Activated CD8-positive, alpha-beta T cell treated with anti-CD3 and anti-CD28 coated beads for 36 hours (primary cell): ENCODE measurements at regions of chr9 and their contacts with region 1.

Region 1: GRCh38 chr9:129988607-129989361 is 54.2 kb downstream of the FNBP1 start:
- DNase-seq: peak; percentile 42
- ATAC-seq: peak; percentile 51
- H3K4me3 Mint-ChIP-seq: peak overlapping the region; percentile 31
- H3K27ac Mint-ChIP-seq: peak overlapping the region; percentile 93
- H3K4me1 Mint-ChIP-seq: peaks cover 75% of the 10 kb centered on the region
- H3K27me3 Mint-ChIP-seq: no peaks in the 10 kb centered on the region
- CTCF ChIP-seq: no peak

Region 2: DNA sequence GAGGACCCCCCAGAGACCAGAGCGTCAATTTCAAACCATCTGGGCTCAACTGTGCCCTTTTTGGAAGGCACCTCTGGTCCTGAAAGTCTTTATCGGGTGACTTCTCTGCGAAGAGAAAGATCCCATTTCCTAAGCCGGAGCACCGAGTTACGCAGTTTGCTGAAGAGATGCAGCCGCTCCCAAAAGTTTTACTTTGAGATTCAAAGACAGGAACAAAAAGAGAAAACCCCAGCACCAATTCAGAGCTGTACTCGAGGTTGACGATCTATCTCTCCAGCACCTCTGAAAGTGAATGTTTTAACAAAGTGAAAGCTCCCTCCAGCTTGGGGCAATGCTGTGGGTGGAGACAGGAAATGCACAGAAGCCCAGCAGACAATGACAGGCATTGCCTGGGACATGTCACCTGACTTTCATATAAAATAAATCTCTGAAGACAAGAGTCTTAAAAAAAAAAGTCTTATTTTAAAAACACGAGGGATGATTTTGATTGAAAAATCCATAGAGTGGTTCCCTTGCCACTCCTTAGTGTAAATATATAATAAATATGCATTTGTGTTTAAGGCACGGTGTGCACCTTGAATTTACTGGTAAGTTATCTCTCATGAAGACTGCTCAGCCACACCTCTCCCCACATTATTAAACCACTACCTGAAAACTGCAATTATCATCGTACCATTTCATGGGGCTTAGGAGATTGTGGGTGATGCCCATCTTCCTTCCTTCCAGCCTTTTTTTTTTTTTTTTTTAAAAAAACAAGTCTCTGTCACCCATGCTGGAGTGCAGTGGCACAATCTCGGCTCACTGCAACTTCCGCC is 25.7 kb before region 1 on chr9:
- CTCF ChIA-PET with region 1: no interaction called
- POLR2A ChIA-PET with region 1: interaction called, 12 read pairs
- intact Hi-C with region 1: no loop called
- DNase-seq: peak; percentile 86
- ATAC-seq: peak; percentile 93
- H3K4me3 Mint-ChIP-seq: peak overlapping the region; percentile 79
- H3K27ac Mint-ChIP-seq: peak overlapping the region; percentile 89
- H3K4me1 Mint-ChIP-seq: peaks cover 82% of the 10 kb centered on the region
- H3K27me3 Mint-ChIP-seq: no peaks in the 10 kb centered on the region
- CTCF ChIP-seq: no peak

Region 3: GRCh38 chr9:130018260-130018659 is 29.5 kb after region 1 on chr9:
- CTCF ChIA-PET with region 1: interaction called, 4 read pairs
- POLR2A ChIA-PET with region 1: interaction called, 21 read pairs
- intact Hi-C with region 1: no loop called
- DNase-seq: peak; percentile 44
- ATAC-seq: no peak
- H3K4me3 Mint-ChIP-seq: no peak overlapping the region
- H3K27ac Mint-ChIP-seq: peak overlapping the region; percentile 95
- H3K4me1 Mint-ChIP-seq: peaks cover 75% of the 10 kb centered on the region
- H3K27me3 Mint-ChIP-seq: no peaks in the 10 kb centered on the region
- CTCF ChIP-seq: no peak

Region 4: DNA sequence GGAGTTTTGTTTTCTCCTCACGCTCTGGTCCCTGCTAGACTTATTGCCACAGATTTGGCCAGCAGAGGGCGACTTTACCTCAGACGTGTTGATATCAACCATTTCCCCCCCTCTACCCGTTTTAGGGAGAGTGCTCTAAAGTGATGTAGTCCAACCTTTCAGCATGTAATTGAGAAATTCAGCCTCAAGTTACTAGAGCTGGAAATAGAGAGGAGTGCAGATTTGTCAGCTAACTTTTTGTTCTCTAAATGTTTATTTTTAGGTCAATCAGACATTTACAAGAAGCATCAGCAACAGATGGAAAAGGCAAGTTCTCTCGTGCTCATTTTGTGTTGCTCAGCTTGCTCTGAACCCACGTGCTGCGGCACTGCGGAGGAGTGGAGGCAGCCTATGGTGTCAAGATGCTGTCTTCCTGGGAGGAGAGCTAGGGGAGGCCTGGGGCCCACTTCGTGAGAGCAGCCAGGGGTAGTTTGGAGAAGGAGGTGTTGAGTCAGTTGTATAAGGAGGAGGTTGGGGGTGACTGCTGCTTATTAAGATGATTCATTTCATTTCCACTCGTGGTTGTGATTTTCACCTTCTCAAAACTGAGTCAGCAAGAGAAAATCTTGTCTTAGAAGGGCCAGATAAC is 118.6 kb after region 1 on chr9:
- CTCF ChIA-PET with region 1: no interaction called
- POLR2A ChIA-PET with region 1: no interaction called
- intact Hi-C with region 1: no loop called
- DNase-seq: peak; percentile 95
- ATAC-seq: peak; percentile 89
- H3K4me3 Mint-ChIP-seq: no peak overlapping the region
- H3K27ac Mint-ChIP-seq: peak overlapping the region; percentile 81
- H3K4me1 Mint-ChIP-seq: peaks cover 33% of the 10 kb centered on the region
- H3K27me3 Mint-ChIP-seq: no peaks in the 10 kb centered on the region
- CTCF ChIP-seq: peak; percentile 95

Region 5: DNA sequence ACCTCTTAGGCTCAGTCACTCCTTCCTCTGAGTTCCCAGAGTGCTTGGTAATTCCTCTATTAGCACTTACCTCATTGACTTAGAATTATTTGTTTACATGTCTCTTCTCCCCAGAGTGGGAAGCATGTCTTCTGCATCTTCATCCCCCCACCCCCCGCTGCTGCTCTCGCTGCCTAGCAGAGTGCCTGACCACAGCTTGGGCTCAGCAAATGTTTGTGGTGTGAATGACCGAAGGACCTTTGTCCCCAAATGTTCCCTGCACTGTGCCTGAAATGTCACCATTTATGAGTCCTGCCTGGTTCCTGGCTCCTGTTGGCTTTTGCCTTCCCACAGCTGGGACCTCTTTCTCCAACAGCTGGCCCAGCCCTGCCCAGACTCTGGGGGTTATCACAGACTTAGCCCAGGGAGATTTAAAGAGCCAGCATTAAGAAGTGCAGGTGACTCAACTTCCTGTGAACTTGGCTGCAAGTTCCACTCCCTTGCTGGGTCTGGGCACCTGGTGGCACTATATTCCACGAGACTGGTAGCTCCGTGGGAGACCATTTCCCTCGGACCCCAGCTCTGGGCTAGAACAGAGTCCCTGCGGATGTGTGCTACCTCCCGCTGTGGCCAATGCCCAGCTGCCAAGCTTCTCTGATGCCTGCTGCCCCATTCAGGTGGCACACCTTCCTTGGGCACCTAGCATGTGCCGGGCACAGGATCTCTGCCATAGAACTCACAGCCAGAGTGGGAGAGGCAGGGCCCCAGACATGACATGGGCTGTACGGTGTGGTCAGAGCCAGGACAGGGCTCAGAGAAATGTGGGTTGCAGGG is 275.0 kb after region 1 on chr9:
- CTCF ChIA-PET with region 1: no interaction called
- POLR2A ChIA-PET with region 1: no interaction called
- intact Hi-C with region 1: no loop called
- DNase-seq: peak; percentile 8
- ATAC-seq: no peak
- H3K4me3 Mint-ChIP-seq: no peak overlapping the region
- H3K27ac Mint-ChIP-seq: no peak overlapping the region
- H3K4me1 Mint-ChIP-seq: peaks cover 2% of the 10 kb centered on the region
- H3K27me3 Mint-ChIP-seq: peaks cover 65% of the 10 kb centered on the region
- CTCF ChIP-seq: no peak